HEK293 (cell line): ENCODE measurements at regions of chr1 and their contacts with region 1.

Region 1: DNA sequence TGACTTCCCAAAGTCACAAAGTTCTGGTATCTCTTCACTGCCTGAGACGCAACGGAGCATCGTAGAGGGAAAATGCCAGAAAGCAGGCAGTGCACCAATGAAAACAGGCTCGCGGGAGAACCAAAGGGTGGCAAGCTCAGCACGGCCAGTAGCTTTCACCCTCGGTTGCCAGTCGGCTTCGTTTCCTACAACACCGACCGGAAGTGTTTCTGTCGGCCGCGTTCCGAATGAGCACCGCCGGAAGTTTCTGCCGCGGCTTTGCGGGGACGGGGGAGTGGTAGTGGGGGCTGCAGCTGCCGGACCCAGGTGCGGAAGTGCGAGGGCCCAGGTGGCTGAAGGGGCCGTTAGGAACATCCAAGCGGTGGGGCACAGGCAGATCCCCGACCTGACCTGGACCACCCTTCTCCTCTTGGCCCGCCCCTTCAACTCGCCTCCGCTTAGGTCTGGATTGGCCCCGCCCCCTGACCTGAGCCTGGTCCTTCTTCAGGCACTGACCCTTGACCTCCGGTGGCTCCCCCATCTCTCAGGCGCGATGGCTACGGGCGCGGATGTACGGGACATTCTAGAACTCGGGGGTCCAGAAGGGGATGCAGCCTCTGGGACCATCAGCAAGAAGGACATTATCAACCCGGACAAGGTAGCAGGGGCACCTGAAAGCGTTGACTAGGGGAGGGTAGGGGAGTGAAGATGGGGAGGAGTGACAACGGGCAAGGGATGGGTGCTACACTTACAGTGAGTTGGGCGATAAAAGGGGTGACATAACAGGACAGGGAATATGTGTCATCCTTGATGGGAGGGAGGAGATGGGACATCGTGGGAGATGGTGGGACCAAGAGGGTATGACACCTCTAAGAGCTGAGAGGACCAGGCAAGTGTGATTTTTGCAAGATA is at the start of gene DMAP1:
- H3K4me3 ChIP-seq: peak within 1 kb of the TSS; percentile 95
- H3K27ac ChIP-seq: no peak within 1 kb of the TSS; the same call in 1 of the 2 replicates
- H3K4me1 ChIP-seq: no peaks in the 10 kb centered on the region
- CTCF ChIP-seq: peak; percentile 71

Region 2: GRCh38 chr1:43844114-43844513 is 369.4 kb before region 1 on chr1:
- CTCF ChIA-PET with region 1: no interaction called
- POLR2A ChIA-PET with region 1: no interaction called
- H3K4me3 ChIP-seq: no peak overlapping the region
- H3K27ac ChIP-seq: no peak overlapping the region
- H3K4me1 ChIP-seq: peaks cover 2% of the 10 kb centered on the region; the same call in 1 of the 2 replicates
- CTCF ChIP-seq: no peak

Region 3: GRCh38 chr1:44090429-44091252 is 122.8 kb before region 1 on chr1:
- CTCF ChIA-PET with region 1: interaction called, 31 read pairs
- POLR2A ChIA-PET with region 1: interaction called, 4 read pairs
- H3K4me3 ChIP-seq: no peak overlapping the region
- H3K27ac ChIP-seq: no peak overlapping the region
- H3K4me1 ChIP-seq: no peaks in the 10 kb centered on the region
- CTCF ChIP-seq: no peak

Region 4: DNA sequence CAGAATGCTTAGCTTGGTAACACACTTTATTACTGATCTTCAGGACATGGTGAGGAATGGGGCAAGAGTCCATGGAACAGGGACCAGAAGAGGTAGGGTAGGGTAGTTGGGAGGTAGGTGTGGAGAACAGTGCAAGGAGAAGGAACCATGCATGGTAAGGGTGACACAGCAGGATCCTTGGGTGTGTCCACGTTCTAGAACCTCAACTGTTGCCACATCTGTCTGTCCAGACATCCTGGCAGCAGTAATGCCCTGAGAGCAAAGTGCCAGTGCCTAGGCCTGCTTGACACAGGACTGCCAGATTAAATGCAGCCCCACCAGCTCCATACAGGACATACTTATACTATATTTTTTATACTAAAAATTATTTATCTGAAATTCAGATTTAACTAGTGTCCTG is 13.7 kb after region 1 on chr1:
- CTCF ChIA-PET with region 1: interaction called, 29 read pairs
- POLR2A ChIA-PET with region 1: interaction called, 3 read pairs
- H3K4me3 ChIP-seq: no peak overlapping the region
- H3K27ac ChIP-seq: no peak overlapping the region
- H3K4me1 ChIP-seq: no peaks in the 10 kb centered on the region
- CTCF ChIP-seq: no peak

Region 5: DNA sequence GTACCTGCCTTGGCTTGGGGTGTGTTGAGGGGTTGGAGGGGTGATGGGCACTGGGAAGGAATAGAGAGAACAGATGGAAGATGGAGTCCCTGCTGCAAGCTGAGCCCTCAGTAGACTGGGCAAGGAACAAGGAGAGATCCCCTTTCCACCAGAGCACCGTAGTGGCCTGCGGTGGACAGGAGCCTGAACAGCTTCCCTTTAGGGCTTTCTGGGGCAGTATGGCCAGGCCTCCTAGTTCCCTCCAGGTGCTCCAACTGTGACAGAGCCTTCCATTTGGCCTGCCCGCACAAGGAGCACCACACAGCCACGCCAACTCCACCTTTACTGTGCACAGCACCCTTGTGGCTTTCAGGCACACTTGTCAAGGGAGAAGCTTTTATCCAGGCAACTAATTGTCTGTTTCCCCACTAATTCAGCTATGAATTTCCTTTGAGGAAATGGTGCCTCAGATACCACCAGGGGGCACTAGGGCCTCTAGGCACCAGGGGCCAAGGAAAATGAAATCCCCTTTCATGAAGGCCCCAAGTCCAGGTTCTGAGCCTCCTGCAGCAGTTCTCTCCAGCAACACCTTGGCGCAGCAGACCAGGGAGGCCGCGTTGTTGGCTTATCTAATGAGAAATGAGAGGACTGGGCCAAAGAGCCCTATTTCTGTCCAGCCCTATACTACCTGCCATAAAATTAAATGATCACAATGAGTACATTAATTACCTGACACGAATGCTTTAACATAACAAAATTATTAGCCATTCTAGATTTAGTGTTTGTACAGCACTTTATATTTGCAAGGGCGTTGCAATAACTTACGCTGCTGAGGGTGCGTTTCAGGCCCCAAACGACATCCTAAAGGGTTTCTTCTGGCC is 164.7 kb after region 1 on chr1:
- CTCF ChIA-PET with region 1: interaction called, 24 read pairs
- POLR2A ChIA-PET with region 1: no interaction called
- H3K4me3 ChIP-seq: no peak overlapping the region
- H3K27ac ChIP-seq: no peak overlapping the region
- H3K4me1 ChIP-seq: no peaks in the 10 kb centered on the region
- CTCF ChIP-seq: peak; percentile 54

Region 6: DNA sequence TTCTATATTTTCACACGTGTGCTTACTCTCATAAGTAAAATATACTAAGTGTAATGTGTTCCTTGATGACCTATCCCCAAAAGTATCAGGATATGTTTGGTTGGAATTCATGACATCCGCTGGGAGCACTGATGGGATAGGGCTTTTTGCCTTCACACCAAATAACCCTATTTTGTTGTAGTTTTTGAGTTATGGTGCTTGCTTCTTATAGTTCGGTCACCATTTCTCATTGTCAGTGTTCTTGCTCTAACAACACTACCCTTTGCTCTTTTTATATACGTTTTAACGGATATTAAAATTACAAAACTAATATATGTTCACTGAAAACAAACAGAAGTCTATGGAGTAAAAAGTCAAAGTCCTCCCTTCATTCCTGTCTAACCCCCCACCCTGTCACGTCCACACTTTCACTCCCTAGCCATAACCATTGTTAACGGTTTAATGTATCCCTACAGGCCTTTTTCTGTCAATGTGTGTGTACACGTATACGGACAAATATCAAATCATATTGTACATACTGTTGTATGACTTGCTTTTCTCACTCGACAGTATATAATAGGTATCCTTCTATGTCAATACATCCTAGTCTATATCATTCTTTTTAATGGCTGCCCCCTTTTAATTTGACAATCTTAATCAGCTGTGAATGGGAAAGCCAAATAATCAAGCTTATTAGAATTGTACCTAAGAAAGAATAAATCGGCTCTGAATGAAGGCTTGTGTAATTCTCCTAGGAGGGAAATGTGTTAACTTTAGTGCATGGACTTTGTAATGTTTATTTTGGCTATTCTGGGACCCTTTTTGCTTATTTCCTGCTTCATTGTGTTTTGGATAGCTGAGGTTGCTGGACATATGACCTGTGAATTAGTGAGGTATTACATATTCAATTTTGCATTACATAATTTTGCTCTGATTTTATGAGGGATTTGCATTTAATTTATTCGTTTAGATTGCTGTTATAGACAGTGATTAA is 188.1 kb after region 1 on chr1:
- CTCF ChIA-PET with region 1: no interaction called
- POLR2A ChIA-PET with region 1: no interaction called
- H3K4me3 ChIP-seq: no peak overlapping the region
- H3K27ac ChIP-seq: no peak overlapping the region
- H3K4me1 ChIP-seq: no peaks in the 10 kb centered on the region
- CTCF ChIP-seq: no peak